CD4-positive, alpha-beta memory T cell (primary cell): ENCODE measurements at regions of chr17 and their contacts with region 1.

Region 1: GRCh38 chr17:29369831-29370735 is 20.1 kb upstream of the TAOK1 start:
- DNase-seq: peak; percentile 67 to 75 (median 72)
- H3K4me3 ChIP-seq: peak overlapping the region in 1 of 2 donors; percentile 36
- H3K4me3 Mint-ChIP-seq: no peak overlapping the region
- H3K27ac ChIP-seq: peak overlapping the region; percentile 35
- H3K27ac Mint-ChIP-seq: no peak overlapping the region
- H3K4me1 ChIP-seq: peaks cover 8% of the 10 kb centered on the region
- H3K4me1 Mint-ChIP-seq: no peaks in the 10 kb centered on the region
- H3K27me3 ChIP-seq: no peaks in the 10 kb centered on the region
- H3K27me3 Mint-ChIP-seq: no peaks in the 10 kb centered on the region

Region 2: GRCh38 chr17:29331708-29332085 is 38.4 kb before region 1 on chr17:
- CTCF ChIA-PET with region 1: no interaction called
- POLR2A ChIA-PET with region 1: no interaction called
- intact Hi-C with region 1: no loop called
- DNase-seq: no peak
- H3K4me3 ChIP-seq: no peak overlapping the region
- H3K4me3 Mint-ChIP-seq: no peak overlapping the region
- H3K27ac ChIP-seq: no peak overlapping the region
- H3K27ac Mint-ChIP-seq: no peak overlapping the region
- H3K4me1 ChIP-seq: no peaks in the 10 kb centered on the region
- H3K4me1 Mint-ChIP-seq: peaks cover 0 to 1% (median 0%) of the 10 kb centered on the region in 4 donors
- H3K27me3 ChIP-seq: no peaks in the 10 kb centered on the region
- H3K27me3 Mint-ChIP-seq: no peaks in the 10 kb centered on the region

Region 3: DNA sequence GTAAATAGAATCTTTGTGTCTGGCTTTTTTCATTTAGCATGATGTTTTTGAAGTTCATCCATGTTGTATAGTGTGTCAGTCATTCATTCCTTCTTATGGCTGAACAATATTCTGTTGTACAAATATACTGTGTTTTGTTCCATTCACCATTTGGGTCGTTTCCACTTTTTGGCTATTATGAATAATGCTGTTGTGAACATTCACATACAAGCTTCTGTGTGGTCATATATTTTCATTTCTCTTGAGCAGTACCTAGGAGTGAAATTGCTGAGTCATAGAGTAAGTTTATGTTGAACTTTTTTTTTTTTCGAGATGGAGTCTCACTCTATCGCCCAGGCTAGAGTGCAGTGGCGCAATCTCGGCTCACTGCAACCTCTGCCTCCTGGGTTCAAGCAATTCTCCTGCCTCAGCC is 12.3 kb before region 1 on chr17:
- CTCF ChIA-PET with region 1: interaction called, 13 read pairs
- POLR2A ChIA-PET with region 1: no interaction called
- intact Hi-C with region 1: no loop called
- DNase-seq: no peak
- H3K4me3 ChIP-seq: no peak overlapping the region
- H3K4me3 Mint-ChIP-seq: no peak overlapping the region
- H3K27ac ChIP-seq: no peak overlapping the region
- H3K27ac Mint-ChIP-seq: no peak overlapping the region
- H3K4me1 ChIP-seq: no peaks in the 10 kb centered on the region
- H3K4me1 Mint-ChIP-seq: no peaks in the 10 kb centered on the region
- H3K27me3 ChIP-seq: no peaks in the 10 kb centered on the region
- H3K27me3 Mint-ChIP-seq: peaks cover 0 to 4% of the 10 kb centered on the region in 2 donors

Region 4: GRCh38 chr17:29407856-29408255 is 37.8 kb after region 1 on chr17:
- CTCF ChIA-PET with region 1: interaction called, 10 read pairs
- POLR2A ChIA-PET with region 1: no interaction called
- intact Hi-C with region 1: no loop called
- DNase-seq: no peak
- H3K4me3 ChIP-seq: no peak overlapping the region
- H3K4me3 Mint-ChIP-seq: no peak overlapping the region
- H3K27ac ChIP-seq: no peak overlapping the region
- H3K27ac Mint-ChIP-seq: peak overlapping the region in 2 of 7 donors; percentile 56 to 77
- H3K4me1 ChIP-seq: peaks cover 20% of the 10 kb centered on the region
- H3K4me1 Mint-ChIP-seq: peaks cover 35 to 55% (median 44%) of the 10 kb centered on the region in 4 donors
- H3K27me3 ChIP-seq: no peaks in the 10 kb centered on the region
- H3K27me3 Mint-ChIP-seq: no peaks in the 10 kb centered on the region

Region 5: DNA sequence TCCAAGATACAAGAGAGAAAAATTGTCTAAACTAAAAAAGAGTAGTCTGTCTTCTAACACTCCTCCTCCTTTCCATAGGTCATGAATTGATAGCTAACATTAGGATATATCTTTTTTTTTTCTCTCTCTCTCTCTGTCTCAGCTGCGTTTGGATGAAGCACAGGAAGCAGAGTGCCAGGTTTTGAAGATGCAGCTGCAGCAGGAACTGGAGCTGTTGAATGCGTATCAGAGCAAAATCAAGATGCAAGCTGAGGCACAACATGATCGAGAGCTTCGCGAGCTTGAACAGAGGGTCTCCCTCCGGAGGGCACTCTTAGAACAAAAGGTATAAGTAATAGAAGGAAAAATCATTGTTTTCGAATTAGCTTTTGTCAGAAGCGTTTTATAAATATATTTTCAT is 163.9 kb after region 1 on chr17:
- CTCF ChIA-PET with region 1: interaction called, 103 read pairs
- POLR2A ChIA-PET with region 1: interaction called, 4 read pairs
- intact Hi-C with region 1: loop called (anchors 1 kb)
- DNase-seq: no peak
- H3K4me3 ChIP-seq: no peak overlapping the region
- H3K4me3 Mint-ChIP-seq: no peak overlapping the region
- H3K27ac ChIP-seq: no peak overlapping the region
- H3K27ac Mint-ChIP-seq: no peak overlapping the region
- H3K4me1 ChIP-seq: no peaks in the 10 kb centered on the region
- H3K4me1 Mint-ChIP-seq: no peaks in the 10 kb centered on the region
- H3K27me3 ChIP-seq: no peaks in the 10 kb centered on the region
- H3K27me3 Mint-ChIP-seq: no peaks in the 10 kb centered on the region

Region 6: GRCh38 chr17:29579866-29580771 is 210.0 kb after region 1 on chr17:
- CTCF ChIA-PET with region 1: interaction called, 10 read pairs
- POLR2A ChIA-PET with region 1: no interaction called
- intact Hi-C with region 1: loop called (anchors 10 kb)
- DNase-seq: peak; percentile 85 to 91 (median 87)
- H3K4me3 ChIP-seq: no peak overlapping the region
- H3K4me3 Mint-ChIP-seq: peak overlapping the region in 2 of 8 donors; percentile 8 to 65
- H3K27ac ChIP-seq: no peak overlapping the region
- H3K27ac Mint-ChIP-seq: peak overlapping the region; percentile 55 to 90 (median 83)
- H3K4me1 ChIP-seq: peaks cover 18% of the 10 kb centered on the region
- H3K4me1 Mint-ChIP-seq: peaks cover 8 to 31% (median 18%) of the 10 kb centered on the region in 4 donors
- H3K27me3 ChIP-seq: no peaks in the 10 kb centered on the region
- H3K27me3 Mint-ChIP-seq: no peaks in the 10 kb centered on the region